MCF 10A (cell line): ENCODE measurements at regions of chr13 and their contacts with region 1.

Region 1: GRCh38 chr13:51070005-51070649 is 40.9 kb downstream of the C13orf42 start:
- DNase-seq: peak; percentile 77
- H3K4me3 Mint-ChIP-seq: no peak overlapping the region
- H3K27ac Mint-ChIP-seq: no peak overlapping the region
- H3K4me1 Mint-ChIP-seq: peaks cover 9% of the 10 kb centered on the region
- H3K27me3 Mint-ChIP-seq: peaks cover 14% of the 10 kb centered on the region
- CTCF ChIP-seq: peak; percentile 94

Region 2: GRCh38 chr13:49652355-49653305 is 1417.5 kb before region 1 on chr13:
- CTCF ChIA-PET with region 1: interaction called, 4 read pairs
- POLR2A ChIA-PET with region 1: no interaction called
- intact Hi-C with region 1: loop called (anchors 5 kb)
- DNase-seq: peak; percentile 59
- H3K4me3 Mint-ChIP-seq: no peak overlapping the region
- H3K27ac Mint-ChIP-seq: no peak overlapping the region
- H3K4me1 Mint-ChIP-seq: no peaks in the 10 kb centered on the region
- H3K27me3 Mint-ChIP-seq: no peaks in the 10 kb centered on the region
- CTCF ChIP-seq: peak; percentile 34

Region 3: DNA sequence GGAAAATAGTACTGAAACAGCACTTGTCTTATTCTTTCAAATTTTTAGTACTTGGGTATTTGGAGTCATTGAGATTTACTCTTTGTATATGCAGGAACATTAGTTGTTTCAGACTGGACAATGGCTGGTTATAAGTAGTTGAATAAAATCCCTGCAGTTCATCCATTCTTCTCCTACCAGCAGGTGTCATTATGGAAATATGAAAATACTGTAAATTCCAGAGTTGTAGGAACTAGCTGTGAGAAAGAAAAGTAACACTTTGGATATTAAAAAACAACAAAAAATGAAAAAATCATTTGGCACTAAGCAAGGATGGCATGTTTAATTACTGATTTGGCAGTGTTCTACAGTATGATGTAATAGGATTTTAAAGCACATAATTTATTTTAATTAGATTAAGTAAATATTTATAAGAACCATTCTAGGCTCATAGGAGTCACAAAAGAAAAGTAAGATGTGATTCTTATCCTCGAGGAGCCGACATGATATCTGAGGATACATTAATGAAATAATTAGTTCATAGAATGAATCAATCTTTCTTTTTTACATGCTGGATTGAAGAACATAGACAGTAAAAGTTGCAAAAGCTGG is 899.6 kb before region 1 on chr13:
- CTCF ChIA-PET with region 1: no interaction called
- POLR2A ChIA-PET with region 1: no interaction called
- intact Hi-C with region 1: loop called (anchors 5 kb)
- DNase-seq: peak; percentile 42
- H3K4me3 Mint-ChIP-seq: no peak overlapping the region
- H3K27ac Mint-ChIP-seq: no peak overlapping the region
- H3K4me1 Mint-ChIP-seq: no peaks in the 10 kb centered on the region
- H3K27me3 Mint-ChIP-seq: no peaks in the 10 kb centered on the region
- CTCF ChIP-seq: peak; percentile 36

Region 4: DNA sequence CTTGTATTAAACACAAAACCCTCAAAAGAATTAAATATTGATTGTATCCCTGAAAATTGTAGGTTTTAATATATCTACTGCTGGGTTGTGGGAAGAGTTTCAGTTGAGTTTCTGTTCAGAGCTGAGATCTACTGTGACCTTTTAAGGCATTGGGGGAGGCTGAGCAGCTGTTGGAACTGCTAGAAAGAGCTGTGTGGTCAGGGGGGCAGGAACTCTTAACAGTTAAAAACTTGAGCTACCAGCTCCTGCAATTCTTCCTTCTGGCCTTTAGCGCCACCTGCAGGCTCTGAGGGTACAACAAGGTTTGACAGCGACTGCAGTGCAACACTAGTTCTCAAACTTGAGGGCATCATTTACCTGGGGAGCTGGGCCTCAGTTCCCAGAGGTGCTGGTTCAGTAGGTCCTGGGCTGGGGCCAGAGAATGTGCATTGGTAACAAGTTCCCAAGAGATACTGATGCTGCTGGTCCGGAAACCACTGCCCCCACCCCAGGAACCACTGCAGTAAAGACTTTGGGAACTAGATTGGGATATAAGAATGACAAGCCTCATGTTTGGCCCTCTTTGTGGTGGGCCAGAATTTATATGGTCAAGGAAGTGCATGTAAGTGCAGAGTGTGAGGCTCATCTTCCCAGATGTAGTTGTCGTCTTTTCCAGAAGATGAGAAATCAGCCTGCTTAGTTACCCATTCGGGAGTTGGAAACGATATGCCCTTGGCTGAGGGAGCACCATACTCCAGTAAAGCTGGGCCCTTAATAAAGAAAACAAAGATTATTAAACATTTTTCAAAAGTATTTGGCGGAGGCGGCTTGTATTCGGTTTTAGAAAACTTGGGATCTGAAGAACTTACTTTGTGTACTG is 158.0 kb before region 1 on chr13:
- CTCF ChIA-PET with region 1: interaction called, 40 read pairs
- POLR2A ChIA-PET with region 1: interaction called, 3 read pairs
- intact Hi-C with region 1: loop called (anchors 2 kb)
- DNase-seq: peak; percentile 90
- H3K4me3 Mint-ChIP-seq: peak overlapping the region; percentile 30
- H3K27ac Mint-ChIP-seq: no peak overlapping the region
- H3K4me1 Mint-ChIP-seq: peaks cover 16% of the 10 kb centered on the region
- H3K27me3 Mint-ChIP-seq: no peaks in the 10 kb centered on the region
- CTCF ChIP-seq: peak; percentile 90

Region 5: GRCh38 chr13:50955216-50955615 is 114.9 kb before region 1 on chr13:
- CTCF ChIA-PET with region 1: no interaction called
- POLR2A ChIA-PET with region 1: no interaction called
- intact Hi-C with region 1: no loop called
- DNase-seq: no peak
- H3K4me3 Mint-ChIP-seq: no peak overlapping the region
- H3K27ac Mint-ChIP-seq: no peak overlapping the region
- H3K4me1 Mint-ChIP-seq: no peaks in the 10 kb centered on the region
- H3K27me3 Mint-ChIP-seq: no peaks in the 10 kb centered on the region
- CTCF ChIP-seq: no peak

Region 6: DNA sequence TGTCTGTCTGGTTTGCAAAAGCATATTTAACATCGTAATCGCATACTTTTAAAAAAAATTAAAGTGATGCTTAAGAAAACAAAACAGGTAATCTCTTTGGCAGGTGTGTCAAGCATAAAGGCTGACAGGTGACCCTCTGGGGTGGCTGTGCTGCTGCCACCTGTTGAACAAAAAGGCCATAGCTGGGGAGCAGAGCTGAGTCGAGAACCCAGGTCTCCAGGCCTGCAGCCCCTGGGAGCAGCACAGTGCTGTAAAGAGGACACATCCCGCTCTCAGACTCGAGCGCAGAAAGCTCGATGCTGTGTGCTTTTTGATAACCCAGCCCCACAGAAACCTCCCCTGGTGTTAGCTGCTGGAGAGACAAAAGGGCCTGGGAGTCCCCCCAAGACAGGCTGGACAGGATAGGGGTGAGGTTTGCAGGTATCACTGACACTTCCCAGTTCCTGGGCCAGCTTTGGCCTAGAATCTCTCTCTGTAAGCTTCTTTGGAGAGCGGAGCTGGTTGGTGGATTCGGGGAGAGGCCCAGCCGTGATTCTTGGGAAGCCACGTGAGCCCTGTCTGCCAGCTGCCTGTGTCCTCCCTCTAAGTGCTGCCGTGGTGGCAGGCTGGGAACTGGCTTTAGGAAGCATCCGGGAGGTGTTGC is 26.0 kb before region 1 on chr13:
- CTCF ChIA-PET with region 1: interaction called, 18 read pairs
- POLR2A ChIA-PET with region 1: no interaction called
- intact Hi-C with region 1: no loop called
- DNase-seq: no peak
- H3K4me3 Mint-ChIP-seq: no peak overlapping the region
- H3K27ac Mint-ChIP-seq: no peak overlapping the region
- H3K4me1 Mint-ChIP-seq: no peaks in the 10 kb centered on the region
- H3K27me3 Mint-ChIP-seq: peaks cover 14% of the 10 kb centered on the region
- CTCF ChIP-seq: no peak